B cell (primary cell): ENCODE measurements at regions of chr19 and their contacts with region 1.

Region 1: GRCh38 chr19:1837625-1838105 is 10.6 kb downstream of the REXO1 start:
- DNase-seq: peak; percentile 66
- ATAC-seq: peak; percentile 85
- H3K4me3 ChIP-seq: no peak overlapping the region
- H3K4me3 Mint-ChIP-seq: no peak overlapping the region
- H3K27ac ChIP-seq: no peak overlapping the region
- H3K27ac Mint-ChIP-seq: no peak overlapping the region
- H3K4me1 ChIP-seq: peaks cover 11 to 12% of the 10 kb centered on the region in 2 donors
- H3K4me1 Mint-ChIP-seq: peaks cover 38% of the 10 kb centered on the region
- H3K27me3 ChIP-seq: no peaks in the 10 kb centered on the region
- H3K27me3 Mint-ChIP-seq: no peaks in the 10 kb centered on the region
- CTCF ChIP-seq: peak; percentile 92

Region 2: GRCh38 chr19:1848399-1849131 is 10.9 kb after region 1 on chr19 and contains the start of gene REXO1:
- CTCF ChIA-PET with region 1: interaction called, 11 read pairs
- POLR2A ChIA-PET with region 1: no interaction called
- intact Hi-C with region 1: no loop called
- DNase-seq: peak; percentile 100
- ATAC-seq: peak; percentile 73
- H3K4me3 ChIP-seq: peak within 1 kb of the TSS; percentile 47 to 95 (median 83)
- H3K4me3 Mint-ChIP-seq: peak within 1 kb of the TSS; percentile 90
- H3K27ac ChIP-seq: peak within 1 kb of the TSS; percentile 95 to 97
- H3K27ac Mint-ChIP-seq: peak within 1 kb of the TSS; percentile 93
- H3K4me1 ChIP-seq: peaks cover 59 to 80% of the 10 kb centered on the region in 2 donors
- H3K4me1 Mint-ChIP-seq: peaks cover 63% of the 10 kb centered on the region
- H3K27me3 ChIP-seq: no peaks in the 10 kb centered on the region
- H3K27me3 Mint-ChIP-seq: no peaks in the 10 kb centered on the region
- CTCF ChIP-seq: peak; percentile 87
- total RNA-seq, gene REXO1: 72.4 and 72.6 TPM in 2 replicates

Region 3: GRCh38 chr19:2015608-2015950 is 177.9 kb after region 1 on chr19 and contains the start of gene BTBD2:
- CTCF ChIA-PET with region 1: no interaction called
- POLR2A ChIA-PET with region 1: no interaction called
- intact Hi-C with region 1: no loop called
- DNase-seq: peak; percentile 54
- ATAC-seq: peak; percentile 58
- H3K4me3 ChIP-seq: peak within 1 kb of the TSS in 4 of 5 experiments; percentile 17 to 55 (median 48)
- H3K4me3 Mint-ChIP-seq: peak within 1 kb of the TSS; percentile 60
- H3K27ac ChIP-seq: peak within 1 kb of the TSS in 1 of 2 donors; percentile 7
- H3K27ac Mint-ChIP-seq: peak within 1 kb of the TSS; percentile 65
- H3K4me1 ChIP-seq: peaks cover 15 to 24% of the 10 kb centered on the region in 2 donors
- H3K4me1 Mint-ChIP-seq: peaks cover 29% of the 10 kb centered on the region
- H3K27me3 ChIP-seq: no peaks in the 10 kb centered on the region
- H3K27me3 Mint-ChIP-seq: no peaks in the 10 kb centered on the region
- CTCF ChIP-seq: no peak
- total RNA-seq, gene BTBD2: 75.2 and 86.2 TPM in 2 replicates